ENCODE measurements at regions of chr1 and their contacts with region 1.

Region 1: GRCh38 chr1:153626922-153627796 is at the start of gene S100A13:
- H3K4me3 ChIP-seq: peak within 1 kb of the TSS; percentile 55
- H3K27ac ChIP-seq: peak within 1 kb of the TSS; percentile 61
- H3K4me1 ChIP-seq: 0 out of 2 replicates have a peak, but pooled peaks cover 3% of the 10 kb centered on the region
- CTCF ChIP-seq: peak; percentile 89

Region 2: DNA sequence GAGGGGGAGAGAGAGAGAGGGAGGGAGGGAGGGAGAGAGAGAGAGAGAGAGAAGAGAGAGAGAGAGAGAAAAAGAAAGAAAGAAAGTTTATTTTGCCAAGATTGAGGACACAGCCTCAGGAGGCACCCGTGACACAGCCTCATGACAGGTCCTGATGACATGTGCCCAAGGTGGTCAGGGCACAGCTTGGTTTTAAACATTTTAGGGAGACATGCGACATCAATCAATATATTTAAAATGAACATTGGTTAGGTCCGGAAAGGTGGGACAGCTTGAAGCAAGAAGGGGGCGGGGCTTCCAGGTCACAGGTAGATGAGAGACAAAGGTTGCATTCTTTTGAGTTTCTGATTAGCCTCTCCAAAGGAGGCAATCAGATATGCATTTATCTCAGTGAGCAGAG is 106.9 kb before region 1 on chr1:
- CTCF ChIA-PET with region 1: interaction called, 11 read pairs
- POLR2A ChIA-PET with region 1: interaction called, 9 read pairs
- H3K4me3 ChIP-seq: no peak overlapping the region
- H3K27ac ChIP-seq: no peak overlapping the region
- H3K4me1 ChIP-seq: no peaks in the 10 kb centered on the region
- CTCF ChIP-seq: no peak

Region 3: GRCh38 chr1:153545067-153546055 is 81.8 kb before region 1 on chr1 and contains the start of gene S100A4:
- CTCF ChIA-PET with region 1: interaction called, 7 read pairs
- POLR2A ChIA-PET with region 1: interaction called, 11 read pairs
- H3K4me3 ChIP-seq: no peak within 1 kb of the TSS
- H3K27ac ChIP-seq: peak within 1 kb of the TSS; percentile 11; the same call in 1 of the 2 replicates
- H3K4me1 ChIP-seq: peaks cover 2% of the 10 kb centered on the region; the same call in 1 of the 2 replicates
- CTCF ChIP-seq: no peak

Region 4: DNA sequence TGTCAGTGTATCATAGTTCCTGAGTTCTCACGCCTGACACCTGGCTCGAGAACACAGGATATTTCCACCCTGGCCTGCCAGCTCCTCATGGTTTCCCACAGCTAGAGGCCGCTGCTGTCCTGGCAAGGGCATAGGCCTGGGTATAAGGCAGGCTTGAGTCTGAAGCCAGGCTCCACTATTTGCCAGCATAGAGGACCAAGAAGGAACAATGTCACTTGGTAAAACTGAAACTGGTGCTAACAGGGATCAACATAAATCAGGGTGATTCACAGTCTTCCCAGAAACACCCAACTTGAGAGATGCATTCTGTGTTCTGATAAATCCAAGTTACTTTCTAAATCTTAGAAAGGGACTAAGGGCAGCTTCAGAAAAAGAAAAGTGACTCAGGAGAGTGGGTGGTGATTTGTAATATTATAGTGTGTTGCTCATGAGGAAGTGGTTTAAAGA is 54.6 kb before region 1 on chr1:
- CTCF ChIA-PET with region 1: interaction called, 37 read pairs
- POLR2A ChIA-PET with region 1: interaction called, 16 read pairs
- H3K4me3 ChIP-seq: no peak overlapping the region
- H3K27ac ChIP-seq: no peak overlapping the region
- H3K4me1 ChIP-seq: no peaks in the 10 kb centered on the region
- CTCF ChIP-seq: peak; percentile 69; the same call in 1 of the 2 replicates

Region 5: GRCh38 chr1:153608742-153609584 is 18.2 kb before region 1 on chr1:
- CTCF ChIA-PET with region 1: interaction called, 28 read pairs
- POLR2A ChIA-PET with region 1: interaction called, 24 read pairs
- H3K4me3 ChIP-seq: peak overlapping the region; percentile 16
- H3K27ac ChIP-seq: no peak overlapping the region
- H3K4me1 ChIP-seq: no peaks in the 10 kb centered on the region
- CTCF ChIP-seq: no peak

Region 6: GRCh38 chr1:153649863-153650235 is 22.7 kb after region 1 on chr1:
- CTCF ChIA-PET with region 1: interaction called, 6 read pairs
- POLR2A ChIA-PET with region 1: interaction called, 13 read pairs
- H3K4me3 ChIP-seq: no peak overlapping the region
- H3K27ac ChIP-seq: no peak overlapping the region
- H3K4me1 ChIP-seq: no peaks in the 10 kb centered on the region
- CTCF ChIP-seq: no peak

Region 7: DNA sequence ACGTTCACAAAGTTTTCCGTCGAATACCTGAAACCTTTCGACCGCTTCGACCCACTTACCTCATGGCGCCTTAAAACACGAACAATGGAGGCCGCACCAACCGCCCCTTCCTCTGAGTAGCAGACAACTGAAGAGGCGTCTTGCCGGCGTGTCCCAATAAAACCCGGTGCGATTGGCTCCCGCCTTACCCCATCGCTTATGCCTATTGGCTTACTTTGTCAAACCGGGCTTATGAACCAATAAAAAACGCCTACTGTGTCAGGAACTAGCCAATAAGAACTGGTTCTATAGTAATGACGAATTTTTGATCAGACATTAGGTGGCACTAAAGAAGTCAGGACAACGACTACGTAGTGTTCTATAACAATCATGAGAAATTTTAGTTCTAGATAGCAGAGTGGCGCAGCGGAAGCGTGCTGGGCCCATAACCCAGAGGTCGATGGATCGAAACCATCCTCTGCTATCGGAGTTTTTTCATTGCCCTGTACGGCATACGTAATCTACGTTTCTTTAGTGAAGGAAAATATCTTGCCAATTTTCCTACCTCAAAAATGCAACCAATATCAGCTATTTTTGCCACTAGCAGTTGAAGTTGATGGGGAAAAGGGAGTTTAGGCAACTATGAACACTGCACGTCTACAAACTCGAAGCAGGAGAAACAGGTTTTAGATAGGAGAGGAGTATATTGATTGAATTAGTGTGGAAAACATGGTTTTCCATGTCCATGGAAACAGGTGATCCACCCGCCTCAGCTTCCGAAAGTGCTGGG is 43.9 kb after region 1 on chr1 and contains the start of gene ILF2:
- CTCF ChIA-PET with region 1: interaction called, 3 read pairs
- POLR2A ChIA-PET with region 1: interaction called, 11 read pairs
- H3K4me3 ChIP-seq: peak within 1 kb of the TSS; percentile 85
- H3K27ac ChIP-seq: peak within 1 kb of the TSS; percentile 77
- H3K4me1 ChIP-seq: no peaks in the 10 kb centered on the region
- CTCF ChIP-seq: peak; percentile 90

Region 8: GRCh38 chr1:153688276-153688675 is 61.1 kb after region 1 on chr1:
- CTCF ChIA-PET with region 1: no interaction called
- POLR2A ChIA-PET with region 1: no interaction called
- H3K4me3 ChIP-seq: no peak overlapping the region
- H3K27ac ChIP-seq: no peak overlapping the region
- H3K4me1 ChIP-seq: no peaks in the 10 kb centered on the region
- CTCF ChIP-seq: no peak